Activated CD4-positive, alpha-beta memory T cell treated with anti-CD3 and anti-CD28 coated beads for 36 hours (primary cell): ENCODE measurements at regions of chr11 and their contacts with region 1.

Region 1: GRCh38 chr11:76670485-76671236 is at the start of gene LRRC32:
- DNase-seq: peak; percentile 35
- H3K4me3 Mint-ChIP-seq: peak within 1 kb of the TSS; percentile 65
- H3K27ac Mint-ChIP-seq: no peak within 1 kb of the TSS
- H3K4me1 Mint-ChIP-seq: peaks cover 28% of the 10 kb centered on the region
- H3K27me3 Mint-ChIP-seq: peaks cover 22% of the 10 kb centered on the region
- total RNA-seq, gene LRRC32: 11.2 to 12.3 TPM

Region 2: GRCh38 chr11:76551400-76551799 is 119.3 kb before region 1 on chr11:
- CTCF ChIA-PET with region 1: interaction called, 3 read pairs
- POLR2A ChIA-PET with region 1: no interaction called
- intact Hi-C with region 1: loop called (anchors 5 kb)
- DNase-seq: no peak
- H3K4me3 Mint-ChIP-seq: no peak overlapping the region
- H3K27ac Mint-ChIP-seq: no peak overlapping the region
- H3K4me1 Mint-ChIP-seq: peaks cover 13% of the 10 kb centered on the region
- H3K27me3 Mint-ChIP-seq: no peaks in the 10 kb centered on the region

Region 3: GRCh38 chr11:77278595-77279506 is 608.2 kb after region 1 on chr11:
- CTCF ChIA-PET with region 1: no interaction called
- POLR2A ChIA-PET with region 1: no interaction called
- intact Hi-C with region 1: no loop called
- DNase-seq: no peak
- H3K4me3 Mint-ChIP-seq: no peak overlapping the region
- H3K27ac Mint-ChIP-seq: no peak overlapping the region
- H3K4me1 Mint-ChIP-seq: no peaks in the 10 kb centered on the region
- H3K27me3 Mint-ChIP-seq: peaks cover 5% of the 10 kb centered on the region